AG04449 (cell line): ENCODE measurements at regions of chr9 and their contacts with region 1.

Region 1: DNA sequence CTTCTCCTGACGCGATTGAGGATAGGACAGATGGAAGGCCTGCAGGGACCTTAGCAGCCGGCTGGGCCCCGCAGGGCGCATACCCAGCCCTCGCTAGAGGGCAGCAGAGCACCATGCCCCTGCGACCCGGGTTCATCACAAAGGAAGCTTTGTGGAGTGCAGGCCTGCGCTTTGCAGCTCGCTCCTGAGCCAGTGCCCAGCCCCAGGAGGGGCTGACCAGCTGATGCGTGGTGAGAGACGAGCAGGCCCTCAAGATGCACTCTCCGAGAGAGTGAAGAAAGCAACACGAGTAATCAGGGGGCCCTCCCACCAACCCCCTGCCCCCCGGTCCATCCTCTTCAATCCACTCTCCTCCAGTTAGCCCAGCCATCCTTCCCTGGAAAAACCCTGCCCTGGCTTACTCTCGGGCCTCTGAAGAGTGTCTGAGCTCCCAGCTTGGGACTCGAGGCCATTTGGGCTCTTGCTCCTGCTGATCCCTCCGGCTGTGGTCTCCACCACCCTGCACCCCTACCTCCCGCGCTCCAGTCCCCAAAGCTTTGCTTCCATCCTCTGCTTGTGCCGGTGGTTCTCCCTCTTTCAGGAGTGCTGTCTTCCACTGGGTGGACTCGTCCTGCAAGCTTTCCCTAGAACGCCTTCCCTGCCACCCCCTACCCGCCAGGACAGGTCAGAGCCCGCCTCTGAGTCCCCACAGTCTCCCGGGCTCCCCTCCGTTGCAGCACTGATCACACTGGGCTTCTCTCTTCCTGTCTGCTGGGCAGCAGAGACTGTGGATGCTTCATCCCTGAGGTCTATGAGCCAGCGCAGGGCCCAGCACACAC is 9.1 kb upstream of the KIF12 start:
- DNase-seq: no peak
- H3K4me3 ChIP-seq: no peak overlapping the region
- CTCF ChIP-seq: peak; percentile 97

Region 2: DNA sequence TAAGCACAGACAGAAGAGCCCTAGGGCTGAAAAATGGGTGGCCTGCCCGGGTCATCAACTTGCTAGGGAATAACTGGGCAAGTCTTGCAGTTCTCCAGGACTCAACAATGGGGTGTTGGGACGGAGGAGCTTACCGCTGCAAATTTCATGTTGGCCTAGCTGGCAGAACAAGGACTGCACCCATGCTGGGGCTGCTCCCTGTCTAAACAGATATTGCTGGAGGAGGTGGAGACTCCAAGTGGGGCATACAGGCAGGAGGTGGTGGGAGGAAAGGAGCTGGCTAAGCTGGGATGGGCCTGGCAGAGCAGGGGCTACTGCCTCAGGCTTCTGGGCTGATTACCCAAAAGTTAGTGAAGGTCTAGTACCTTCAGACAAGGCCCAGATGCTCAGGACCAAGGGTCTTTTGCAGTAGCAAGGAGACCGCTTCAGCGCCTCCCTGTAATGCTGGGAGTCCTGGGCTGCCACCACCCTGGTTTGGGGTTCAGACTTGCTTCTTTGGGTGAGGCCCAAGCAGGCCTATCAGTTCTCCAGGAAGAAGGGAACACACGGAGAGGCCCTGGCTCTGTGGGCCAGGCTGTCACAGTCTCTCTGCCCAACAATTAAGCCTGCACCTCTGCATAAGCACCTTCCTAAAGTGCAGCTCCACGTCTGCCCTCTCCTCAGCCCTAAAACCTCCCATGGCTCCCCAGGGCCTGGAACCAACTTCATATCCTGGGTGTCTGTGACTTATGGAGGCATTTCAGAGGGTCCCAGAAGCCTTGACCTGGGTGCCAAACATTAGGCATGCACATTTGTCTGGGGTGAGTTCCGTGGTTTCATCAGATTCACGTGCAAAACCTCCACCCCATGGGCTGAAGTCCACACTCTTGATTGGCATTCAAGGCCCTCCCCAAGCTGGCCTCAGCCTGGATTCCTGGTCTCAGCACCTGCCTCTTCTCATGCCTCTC is 15.1 kb after region 1 on chr9:
- CTCF ChIA-PET with region 1: interaction called, 29 read pairs
- POLR2A ChIA-PET with region 1: interaction called, 4 read pairs
- DNase-seq: no peak
- H3K4me3 ChIP-seq: no peak overlapping the region
- CTCF ChIP-seq: no peak

Region 3: GRCh38 chr9:114163517-114163951 is 55.3 kb after region 1 on chr9:
- CTCF ChIA-PET with region 1: interaction called, 12 read pairs
- POLR2A ChIA-PET with region 1: no interaction called
- DNase-seq: no peak
- H3K4me3 ChIP-seq: no peak overlapping the region
- CTCF ChIP-seq: no peak

Region 4: GRCh38 chr9:114233491-114234185 is 125.4 kb after region 1 on chr9:
- CTCF ChIA-PET with region 1: interaction called, 28 read pairs
- POLR2A ChIA-PET with region 1: no interaction called
- DNase-seq: no peak
- H3K4me3 ChIP-seq: no peak overlapping the region
- CTCF ChIP-seq: no peak

Region 5: DNA sequence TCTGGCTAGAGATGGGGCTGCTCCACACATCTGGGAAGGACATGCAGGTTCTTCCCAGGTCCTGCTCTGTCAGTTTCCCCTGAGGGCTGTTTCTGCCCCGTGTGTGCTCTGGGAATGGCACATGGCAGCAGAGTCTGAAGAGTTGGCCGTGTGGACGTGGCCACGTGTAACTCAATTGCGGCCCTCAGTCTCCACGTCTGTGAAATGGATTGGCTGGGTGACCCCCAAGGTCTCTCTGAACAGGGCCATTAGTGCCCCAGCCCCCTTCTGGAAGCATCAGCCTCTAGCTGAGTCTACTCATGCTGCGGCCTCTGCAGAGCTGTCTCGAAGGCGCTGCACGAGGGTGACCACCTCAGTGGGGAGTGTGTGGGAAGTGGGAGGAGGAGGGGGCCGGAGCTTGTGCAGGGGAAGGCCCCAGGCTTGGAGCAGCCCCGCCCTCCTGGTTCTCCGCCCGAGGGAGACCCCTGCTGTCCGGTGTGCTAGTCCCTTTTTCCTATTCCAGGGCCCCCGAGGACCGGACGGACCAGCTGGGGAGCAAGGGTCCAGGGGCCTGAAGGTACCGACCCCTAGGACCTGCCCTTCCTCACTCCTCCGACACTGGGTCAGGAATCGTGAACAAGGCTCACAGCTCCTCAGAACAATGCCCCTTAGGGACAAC is 155.8 kb after region 1 on chr9:
- CTCF ChIA-PET with region 1: interaction called, 90 read pairs
- POLR2A ChIA-PET with region 1: no interaction called
- DNase-seq: no peak
- H3K4me3 ChIP-seq: no peak overlapping the region
- CTCF ChIP-seq: peak; percentile 41

Region 6: GRCh38 chr9:114291064-114291474 is 182.8 kb after region 1 on chr9:
- CTCF ChIA-PET with region 1: interaction called, 686 read pairs
- POLR2A ChIA-PET with region 1: interaction called, 7 read pairs
- DNase-seq: no peak
- H3K4me3 ChIP-seq: no peak overlapping the region
- CTCF ChIP-seq: peak; percentile 74

Region 7: DNA sequence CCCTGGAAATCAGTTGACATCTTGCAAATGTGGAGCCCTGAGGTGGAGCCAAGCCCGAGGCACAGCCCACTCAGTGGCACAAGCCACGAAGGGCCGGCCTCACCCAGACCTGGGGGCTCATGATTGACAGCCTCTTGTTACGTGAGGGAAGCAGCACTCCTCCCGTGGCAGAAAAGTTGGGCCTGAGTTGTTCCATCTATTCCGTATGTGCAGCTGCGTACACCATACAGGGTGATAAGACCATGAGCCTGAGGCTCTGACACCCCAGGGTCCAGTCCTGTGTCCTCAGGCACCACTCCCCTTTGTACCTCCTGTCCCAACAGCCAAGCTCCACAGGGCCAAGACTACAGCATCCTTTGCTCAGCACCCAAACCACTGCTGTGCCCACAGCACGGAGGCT is 219.5 kb after region 1 on chr9:
- CTCF ChIA-PET with region 1: no interaction called
- POLR2A ChIA-PET with region 1: no interaction called
- DNase-seq: no peak
- H3K4me3 ChIP-seq: no peak overlapping the region
- CTCF ChIP-seq: no peak